Caco-2 (cell line): ENCODE measurements at regions of chr12 and their contacts with region 1.

Region 1: GRCh38 chr12:52992699-52993557 is 13.3 kb upstream of the EIF4B start:
- DNase-seq: peak; percentile 78 to 81
- H3K4me3 ChIP-seq: no peak overlapping the region
- H3K4me3 Mint-ChIP-seq: peak overlapping the region; percentile 55
- H3K27ac Mint-ChIP-seq: peak overlapping the region; percentile 58
- H3K4me1 ChIP-seq: peaks cover 43% of the 10 kb centered on the region
- H3K4me1 Mint-ChIP-seq: peaks cover 33% of the 10 kb centered on the region
- H3K27me3 ChIP-seq: no peaks in the 10 kb centered on the region
- H3K27me3 Mint-ChIP-seq: no peaks in the 10 kb centered on the region
- CTCF ChIP-seq: no peak

Region 2: GRCh38 chr12:53005986-53006809 is 13.3 kb after region 1 on chr12 and contains the start of gene EIF4B:
- CTCF ChIA-PET with region 1: interaction called, 3 read pairs
- POLR2A ChIA-PET with region 1: interaction called, 29 read pairs
- intact Hi-C with region 1: loop called (anchors 1 kb)
- DNase-seq: peak; percentile 99 to 100
- H3K4me3 ChIP-seq: peak within 1 kb of the TSS; percentile 98
- H3K4me3 Mint-ChIP-seq: peak within 1 kb of the TSS; percentile 97
- H3K27ac Mint-ChIP-seq: peak within 1 kb of the TSS; percentile 99
- H3K4me1 ChIP-seq: peaks cover 44% of the 10 kb centered on the region
- H3K4me1 Mint-ChIP-seq: peaks cover 24% of the 10 kb centered on the region
- H3K27me3 ChIP-seq: no peaks in the 10 kb centered on the region
- H3K27me3 Mint-ChIP-seq: no peaks in the 10 kb centered on the region
- CTCF ChIP-seq: no peak
- total RNA-seq, gene EIF4B: 445 and 452 TPM in 2 replicates